HepG2 (cell line): ENCODE measurements at regions of chr9 and their contacts with region 1.

Region 1: DNA sequence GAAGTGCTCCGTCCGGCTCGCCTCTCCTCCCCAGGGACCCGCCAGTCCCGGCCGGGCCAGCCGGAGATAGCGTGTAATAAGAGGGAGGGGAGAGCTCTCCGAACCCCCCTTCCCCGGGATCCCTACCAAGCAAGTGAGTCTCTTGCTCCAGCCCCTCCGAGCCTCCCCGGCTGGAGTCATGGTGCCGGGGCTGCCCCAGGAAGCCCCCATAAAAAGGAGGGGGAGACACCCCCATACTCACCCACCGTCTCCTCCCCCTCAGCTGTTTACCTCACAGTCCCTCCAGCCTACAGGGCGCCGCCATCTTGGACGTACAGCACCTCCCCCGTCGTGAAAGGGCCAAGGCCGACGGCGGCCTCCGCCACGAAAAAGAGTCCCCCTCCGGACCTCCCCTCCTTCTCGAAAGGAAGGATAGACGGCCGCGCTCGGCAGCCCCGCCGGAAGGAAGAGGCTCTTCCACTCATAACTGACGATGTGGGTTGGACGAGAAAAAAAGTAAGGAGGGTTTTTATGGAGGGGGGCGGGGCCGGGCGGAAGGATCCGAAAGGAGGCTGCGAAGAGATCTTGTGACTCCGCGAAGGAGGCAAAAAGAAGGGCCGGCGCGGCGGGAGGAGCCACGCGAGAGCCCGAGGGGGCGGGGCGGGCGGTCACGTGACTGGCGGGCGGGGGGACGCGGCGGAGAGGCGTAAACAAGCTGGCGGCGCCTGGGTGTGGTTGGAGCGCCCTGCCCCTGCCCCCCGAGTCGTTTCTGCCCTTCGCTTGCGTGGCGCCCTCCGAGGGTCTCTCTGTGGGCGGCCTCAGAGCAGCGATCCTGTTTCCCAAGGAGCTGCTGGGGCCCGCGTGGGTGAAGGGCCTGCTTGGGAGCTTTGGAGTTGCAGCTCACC is at the start of gene TSC1:
- DNase-seq: peak; percentile 83
- ATAC-seq: peak; percentile 86
- H3K4me3 ChIP-seq: peak within 1 kb of the TSS; percentile 86 to 100 (median 95)
- H3K27ac ChIP-seq: peak within 1 kb of the TSS; percentile 99
- H3K4me1 ChIP-seq: peaks cover 62% of the 10 kb centered on the region
- H3K27me3 ChIP-seq: peaks cover 0 to 3% of the 10 kb centered on the region in 2 experiments; a peak in 2 of 5 replicates
- CTCF ChIP-seq: 0 out of 2 replicates have a peak, but pooled peaks have one; percentile 7
- EP300 ChIP-seq: peak in 1 of 2 experiments; percentile 64; a peak in 1 of 4 replicates
- POLR2A ChIP-seq: peak; percentile 75 to 84
- RAD21 ChIP-seq: no peak
- total RNA-seq, gene TSC1: 26.3 and 31.6 TPM in 2 replicates

Region 2: GRCh38 chr9:133030317-133031129 is 86.0 kb after region 1 on chr9 and contains the start of gene GTF3C5:
- CTCF ChIA-PET with region 1: no interaction called
- POLR2A ChIA-PET with region 1: interaction called, 16 read pairs
- in situ Hi-C with region 1: no loop called
- intact Hi-C with region 1: no loop called
- DNase-seq: peak; percentile 99
- ATAC-seq: peak; percentile 98
- H3K4me3 ChIP-seq: peak within 1 kb of the TSS; percentile 95 to 99 (median 99)
- H3K27ac ChIP-seq: peak within 1 kb of the TSS; percentile 85
- H3K4me1 ChIP-seq: peaks cover 42% of the 10 kb centered on the region
- H3K27me3 ChIP-seq: no peaks in the 10 kb centered on the region; a peak in 1 of 5 replicates
- CTCF ChIP-seq: no peak
- EP300 ChIP-seq: 0 out of 4 replicates have a peak, but pooled peaks of 1 of the 2 experiments have one; percentile 22
- POLR2A ChIP-seq: peak; percentile 68 to 87
- RAD21 ChIP-seq: peak; percentile 54
- total RNA-seq, gene GTF3C5: 43.4 and 66.9 TPM in 2 replicates